Breast epithelium (tissue), 4 donors: ENCODE measurements at regions of chr3 and their contacts with region 1.

Region 1: GRCh38 chr3:133426721-133427120 is 26.9 kb downstream of the BFSP2 start:
- DNase-seq: no peak
- H3K4me3 ChIP-seq: no peak overlapping the region
- H3K27ac ChIP-seq: no peak overlapping the region
- H3K4me1 ChIP-seq: peaks cover 0 to 4% of the 10 kb centered on the region in 2 donors
- H3K27me3 ChIP-seq: no peaks in the 10 kb centered on the region
- CTCF ChIP-seq: no peak
- POLR2A ChIP-seq: no peak

Region 2: GRCh38 chr3:132730891-132731580 is 695.7 kb before region 1 on chr3:
- intact Hi-C with region 1: loop called (anchors 10 kb)
- DNase-seq: no peak
- H3K4me3 ChIP-seq: no peak overlapping the region
- H3K27ac ChIP-seq: no peak overlapping the region
- H3K4me1 ChIP-seq: no peaks in the 10 kb centered on the region
- H3K27me3 ChIP-seq: no peaks in the 10 kb centered on the region
- CTCF ChIP-seq: peak in 2 of 3 donors; percentile 31 to 32
- POLR2A ChIP-seq: no peak